CD8-positive, alpha-beta T cell (primary cell): ENCODE measurements at regions of chr5 and their contacts with region 1.

Region 1: DNA sequence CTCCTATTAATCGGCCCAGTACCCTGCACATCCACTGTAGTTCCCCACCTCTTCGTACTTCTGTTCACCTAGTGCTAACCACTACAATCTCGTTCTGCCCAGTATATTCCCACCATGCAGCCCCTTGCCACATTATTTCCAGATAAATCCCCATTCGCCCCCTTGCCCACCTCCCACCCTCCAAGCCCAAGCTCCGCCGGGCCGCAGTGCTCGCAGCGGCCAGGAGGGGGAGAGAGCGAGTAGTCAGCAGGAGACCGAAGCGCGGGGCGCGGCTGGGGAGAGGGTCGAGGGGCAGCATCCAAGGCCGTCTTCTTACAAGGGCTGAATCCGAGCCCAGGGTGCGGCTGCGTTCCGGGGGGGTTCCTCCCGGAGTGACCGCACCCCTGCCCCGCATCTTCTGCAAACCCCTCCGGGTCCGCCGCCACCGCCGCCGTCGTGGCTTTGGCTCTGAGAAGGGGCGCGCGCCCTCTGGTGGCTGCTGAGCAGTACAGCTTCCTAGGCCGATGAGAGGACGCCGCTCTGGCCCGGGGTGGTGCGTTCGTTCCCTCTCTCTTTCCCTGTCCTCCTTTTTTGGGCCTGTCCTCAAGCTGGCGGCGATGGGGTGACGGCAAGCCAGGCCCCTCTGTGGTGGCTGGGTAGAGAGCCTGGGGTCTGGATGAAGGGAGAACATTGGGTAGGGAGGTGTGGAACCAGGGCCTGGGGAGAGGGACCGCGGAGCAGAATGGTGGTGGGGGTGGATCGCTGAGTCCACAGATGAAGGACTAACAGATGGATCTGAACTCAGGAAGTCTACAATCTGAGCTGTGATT is 30.0 kb upstream of the PSD2 start:
- DNase-seq: peak; percentile 74 to 93 (median 83)
- ATAC-seq: peak; percentile 92
- H3K4me3 ChIP-seq: peak overlapping the region; percentile 60 to 67
- H3K4me3 Mint-ChIP-seq: peak overlapping the region; percentile 67
- H3K27ac ChIP-seq: no peak overlapping the region
- H3K27ac Mint-ChIP-seq: no peak overlapping the region
- H3K4me1 ChIP-seq: peaks cover 20% of the 10 kb centered on the region
- H3K4me1 Mint-ChIP-seq: peaks cover 16% of the 10 kb centered on the region
- H3K27me3 ChIP-seq: peaks cover 5 to 9% of the 10 kb centered on the region in 2 experiments
- H3K27me3 Mint-ChIP-seq: peaks cover 24% of the 10 kb centered on the region
- CTCF ChIP-seq: peak; percentile 100

Region 2: GRCh38 chr5:139574641-139575312 is 190.8 kb before region 1 on chr5:
- CTCF ChIA-PET with region 1: interaction called, 4 read pairs
- POLR2A ChIA-PET with region 1: no interaction called
- intact Hi-C with region 1: loop called (anchors 1 kb)
- DNase-seq: peak in 5 of 9 experiments; percentile 16 to 76 (median 45)
- ATAC-seq: peak; percentile 42
- H3K4me3 ChIP-seq: no peak overlapping the region
- H3K4me3 Mint-ChIP-seq: peak overlapping the region; percentile 20
- H3K27ac ChIP-seq: peak overlapping the region in 1 of 2 experiments; percentile 34
- H3K27ac Mint-ChIP-seq: peak overlapping the region; percentile 43
- H3K4me1 ChIP-seq: peaks cover 75% of the 10 kb centered on the region
- H3K4me1 Mint-ChIP-seq: peaks cover 79% of the 10 kb centered on the region
- H3K27me3 ChIP-seq: no peaks in the 10 kb centered on the region
- H3K27me3 Mint-ChIP-seq: no peaks in the 10 kb centered on the region
- CTCF ChIP-seq: peak; percentile 72

Region 3: GRCh38 chr5:139690064-139690802 is 75.4 kb before region 1 on chr5:
- CTCF ChIA-PET with region 1: interaction called, 13 read pairs
- POLR2A ChIA-PET with region 1: no interaction called
- intact Hi-C with region 1: no loop called
- DNase-seq: peak in 4 of 9 experiments; percentile 22 to 64 (median 38)
- ATAC-seq: peak; percentile 77
- H3K4me3 ChIP-seq: no peak overlapping the region
- H3K4me3 Mint-ChIP-seq: no peak overlapping the region
- H3K27ac ChIP-seq: no peak overlapping the region
- H3K27ac Mint-ChIP-seq: no peak overlapping the region
- H3K4me1 ChIP-seq: peaks cover 6% of the 10 kb centered on the region
- H3K4me1 Mint-ChIP-seq: peaks cover 19% of the 10 kb centered on the region
- H3K27me3 ChIP-seq: no peaks in the 10 kb centered on the region
- H3K27me3 Mint-ChIP-seq: no peaks in the 10 kb centered on the region
- CTCF ChIP-seq: peak; percentile 44

Region 4: DNA sequence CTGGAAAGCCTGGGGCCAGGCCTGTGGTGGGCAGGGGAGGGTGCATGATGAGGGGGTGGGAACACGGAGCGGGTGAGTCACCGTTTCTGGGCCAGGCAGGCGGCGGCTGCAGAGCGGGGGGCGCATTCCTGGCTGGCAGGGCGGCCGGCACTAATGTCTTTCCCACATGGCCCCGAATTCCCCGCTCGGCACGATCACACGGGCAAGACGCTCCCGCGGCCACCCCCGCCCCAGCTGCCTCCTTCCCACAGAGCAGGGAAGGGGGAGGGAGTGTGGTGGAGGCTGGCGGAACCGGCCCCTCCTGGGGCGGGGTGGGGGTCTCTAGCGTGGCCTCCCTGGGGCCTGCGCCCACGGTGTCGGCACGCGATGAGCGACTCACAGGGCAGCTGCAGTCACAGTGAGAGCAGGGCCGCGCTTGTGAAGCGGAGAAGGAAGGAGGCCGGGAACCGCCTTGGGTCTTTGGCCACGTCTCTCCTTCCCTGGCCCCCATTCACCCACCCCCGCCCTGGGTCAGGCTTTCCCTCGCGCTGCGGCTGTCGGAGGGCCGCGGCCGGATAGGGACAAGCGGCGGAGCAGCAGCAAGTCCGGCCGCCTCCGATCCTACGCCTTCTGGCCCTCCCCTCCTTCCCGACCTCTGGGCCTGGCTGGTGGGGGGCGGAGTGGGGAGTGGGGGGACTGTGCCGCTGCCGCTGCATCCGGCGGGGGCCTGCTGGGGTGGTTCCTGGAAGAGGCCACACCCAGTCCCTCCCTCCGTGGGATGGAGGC is 68.5 kb before region 1 on chr5:
- CTCF ChIA-PET with region 1: interaction called, 13 read pairs
- POLR2A ChIA-PET with region 1: interaction called, 3 read pairs
- intact Hi-C with region 1: no loop called
- DNase-seq: peak in 5 of 9 experiments; percentile 14 to 47 (median 35)
- ATAC-seq: peak; percentile 50
- H3K4me3 ChIP-seq: peak overlapping the region; percentile 42 to 45
- H3K4me3 Mint-ChIP-seq: peak overlapping the region; percentile 80
- H3K27ac ChIP-seq: no peak overlapping the region
- H3K27ac Mint-ChIP-seq: no peak overlapping the region
- H3K4me1 ChIP-seq: peaks cover 34% of the 10 kb centered on the region
- H3K4me1 Mint-ChIP-seq: peaks cover 35% of the 10 kb centered on the region
- H3K27me3 ChIP-seq: peaks cover 0 to 9% of the 10 kb centered on the region in 2 experiments
- H3K27me3 Mint-ChIP-seq: peaks cover 6% of the 10 kb centered on the region
- CTCF ChIP-seq: no peak

Region 5: DNA sequence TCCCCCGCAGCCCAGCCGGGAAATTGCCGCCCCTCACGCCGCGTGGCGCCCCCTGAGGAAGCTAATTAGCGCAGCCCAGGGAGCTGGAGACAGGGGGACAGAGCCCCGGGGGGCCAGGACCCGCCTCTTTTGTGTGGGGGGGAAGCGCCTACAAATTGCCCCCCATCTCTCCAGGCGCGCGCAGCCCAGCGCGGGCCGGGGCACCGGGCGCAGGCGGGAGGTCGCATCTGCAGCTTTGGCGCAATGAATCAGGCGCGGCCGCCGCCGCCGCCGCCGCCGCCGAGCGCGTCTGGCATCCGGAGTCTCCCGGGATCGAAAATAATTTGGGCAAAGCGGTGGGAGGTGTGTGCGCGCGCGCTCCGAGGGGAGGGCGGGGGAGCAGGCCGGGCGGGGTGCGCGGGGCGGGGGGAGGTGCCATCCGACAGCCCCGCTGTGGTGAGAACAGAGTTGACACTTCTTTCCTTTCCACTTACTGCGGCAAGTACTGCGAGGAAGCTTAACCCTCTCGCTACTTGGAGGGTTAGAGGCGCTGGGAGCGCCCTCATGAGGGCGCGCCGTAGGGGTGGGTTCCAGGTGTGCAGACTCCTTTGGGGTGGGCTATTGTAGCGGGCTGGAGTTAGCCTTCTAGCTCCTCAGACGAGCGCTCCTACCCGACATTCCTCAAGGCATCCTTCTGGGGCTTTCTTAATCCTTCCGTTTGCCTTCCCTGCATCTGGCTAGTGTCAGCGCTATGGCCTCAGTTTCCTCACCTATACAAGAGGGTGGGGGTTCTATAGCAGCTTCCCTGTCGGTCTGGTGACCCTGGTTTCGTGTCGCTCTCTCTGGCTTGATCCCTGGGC is 54.3 kb before region 1 on chr5:
- CTCF ChIA-PET with region 1: interaction called, 12 read pairs
- POLR2A ChIA-PET with region 1: interaction called, 3 read pairs
- intact Hi-C with region 1: loop called (anchors 2 to 5 kb)
- DNase-seq: peak; percentile 32 to 90 (median 71)
- ATAC-seq: peak; percentile 60
- H3K4me3 ChIP-seq: peak overlapping the region; percentile 63 to 64
- H3K4me3 Mint-ChIP-seq: peak overlapping the region; percentile 77
- H3K27ac ChIP-seq: peak overlapping the region; percentile 66 to 84
- H3K27ac Mint-ChIP-seq: no peak overlapping the region
- H3K4me1 ChIP-seq: peaks cover 28% of the 10 kb centered on the region
- H3K4me1 Mint-ChIP-seq: peaks cover 39% of the 10 kb centered on the region
- H3K27me3 ChIP-seq: no peaks in the 10 kb centered on the region
- H3K27me3 Mint-ChIP-seq: no peaks in the 10 kb centered on the region
- CTCF ChIP-seq: no peak

Region 6: DNA sequence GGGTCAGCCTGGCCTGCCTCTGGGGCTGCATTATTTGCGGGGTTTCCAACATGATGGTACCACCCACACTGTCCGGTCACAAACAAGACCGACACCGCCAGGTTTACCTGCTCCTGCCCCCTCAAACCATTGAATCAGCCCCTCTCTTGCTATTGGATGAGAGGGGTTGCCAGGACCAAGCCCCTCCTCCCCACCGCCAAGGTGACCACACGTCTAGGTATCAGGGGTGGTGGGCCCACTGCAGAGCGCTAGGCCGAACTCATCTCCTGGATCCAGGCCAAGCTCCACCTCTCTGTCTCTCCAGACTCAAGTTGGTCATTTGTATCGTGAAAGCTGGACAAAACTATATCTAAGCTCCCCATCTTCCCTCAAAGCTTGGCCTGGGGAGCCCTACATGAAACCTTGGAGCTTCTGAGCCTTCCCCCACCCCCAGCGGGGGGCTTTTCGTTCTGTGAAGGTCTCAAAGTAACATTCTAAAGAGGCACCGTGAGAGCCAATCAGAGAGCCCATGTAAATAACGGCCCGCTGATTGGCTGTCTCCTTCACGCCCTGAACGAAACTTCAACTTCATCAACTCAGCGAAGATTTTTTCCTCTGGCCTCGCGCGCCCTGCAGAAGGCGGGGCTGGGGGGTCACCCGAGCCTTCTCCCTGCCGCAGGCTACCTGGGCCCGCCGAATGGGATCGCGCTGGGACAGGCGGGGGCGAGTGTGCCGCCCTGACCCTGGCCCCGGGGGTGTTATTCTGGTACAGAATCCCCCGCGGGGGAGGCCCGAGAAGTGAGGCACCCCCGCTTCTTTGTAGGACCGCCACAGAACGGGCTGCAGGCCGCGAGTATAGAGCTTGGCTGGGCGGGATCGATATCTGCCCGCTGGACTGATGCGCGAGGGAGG is 19.6 kb before region 1 on chr5:
- CTCF ChIA-PET with region 1: interaction called, 37 read pairs
- POLR2A ChIA-PET with region 1: interaction called, 4 read pairs
- intact Hi-C with region 1: loop called in 1 of 2 experiments (anchors 1 kb)
- DNase-seq: peak in 8 of 9 experiments; percentile 24 to 85 (median 58)
- ATAC-seq: peak; percentile 50
- H3K4me3 ChIP-seq: peak overlapping the region; percentile 61 to 73
- H3K4me3 Mint-ChIP-seq: peak overlapping the region; percentile 95
- H3K27ac ChIP-seq: peak overlapping the region in 1 of 2 experiments; percentile 89
- H3K27ac Mint-ChIP-seq: peak overlapping the region; percentile 64
- H3K4me1 ChIP-seq: peaks cover 20% of the 10 kb centered on the region
- H3K4me1 Mint-ChIP-seq: peaks cover 19% of the 10 kb centered on the region
- H3K27me3 ChIP-seq: no peaks in the 10 kb centered on the region
- H3K27me3 Mint-ChIP-seq: peaks cover 3% of the 10 kb centered on the region
- CTCF ChIP-seq: no peak

Region 7: DNA sequence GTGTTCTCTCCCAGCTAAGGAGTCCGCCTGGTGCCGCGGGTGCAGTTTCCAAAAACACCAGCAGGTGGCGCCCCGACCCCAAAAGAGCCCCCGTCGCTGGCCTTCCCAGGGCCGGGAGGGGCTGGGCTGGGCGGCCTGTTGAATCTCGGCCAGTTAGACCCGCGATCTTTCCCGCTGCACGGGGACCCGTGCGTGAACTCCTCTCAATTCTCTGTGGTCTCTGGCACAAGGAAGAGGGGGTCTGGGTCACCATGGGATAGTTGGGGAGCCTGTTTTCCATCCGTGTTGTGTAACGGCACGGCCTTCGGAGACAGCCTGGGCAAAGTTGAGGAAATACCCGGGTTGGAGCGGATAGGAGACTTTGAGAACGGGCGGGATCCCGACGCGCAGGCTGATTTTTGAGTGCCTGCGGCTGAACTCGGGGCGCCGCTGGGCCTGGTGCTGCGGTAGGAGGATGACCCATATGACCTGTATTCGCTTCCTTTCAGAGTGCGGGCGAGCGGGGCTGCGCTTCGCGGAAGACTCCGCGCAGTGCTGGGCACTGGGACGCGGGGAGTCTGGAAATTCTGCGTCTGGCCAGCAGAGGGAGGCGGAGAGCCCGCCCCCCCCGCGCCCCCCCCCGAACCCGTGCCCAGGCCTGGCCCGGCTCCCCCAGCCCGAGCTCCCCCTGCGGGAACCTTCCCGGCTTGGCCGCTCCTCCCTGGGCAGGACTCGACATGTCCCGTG is 22.1 kb after region 1 on chr5:
- CTCF ChIA-PET with region 1: interaction called, 12 read pairs
- POLR2A ChIA-PET with region 1: no interaction called
- intact Hi-C with region 1: no loop called
- DNase-seq: peak; percentile 69 to 95 (median 84)
- ATAC-seq: peak; percentile 91
- H3K4me3 ChIP-seq: peak overlapping the region; percentile 58 to 63
- H3K4me3 Mint-ChIP-seq: peak overlapping the region; percentile 83
- H3K27ac ChIP-seq: no peak overlapping the region
- H3K27ac Mint-ChIP-seq: no peak overlapping the region
- H3K4me1 ChIP-seq: peaks cover 4% of the 10 kb centered on the region
- H3K4me1 Mint-ChIP-seq: peaks cover 6% of the 10 kb centered on the region
- H3K27me3 ChIP-seq: peaks cover 0 to 9% of the 10 kb centered on the region in 2 experiments
- H3K27me3 Mint-ChIP-seq: peaks cover 26% of the 10 kb centered on the region
- CTCF ChIP-seq: peak; percentile 96

Region 8: GRCh38 chr5:140509898-140510297 is 744.3 kb after region 1 on chr5:
- CTCF ChIA-PET with region 1: no interaction called
- POLR2A ChIA-PET with region 1: no interaction called
- intact Hi-C with region 1: no loop called
- DNase-seq: no peak
- ATAC-seq: no peak
- H3K4me3 ChIP-seq: no peak overlapping the region
- H3K4me3 Mint-ChIP-seq: no peak overlapping the region
- H3K27ac ChIP-seq: no peak overlapping the region
- H3K27ac Mint-ChIP-seq: no peak overlapping the region
- H3K4me1 ChIP-seq: no peaks in the 10 kb centered on the region
- H3K4me1 Mint-ChIP-seq: no peaks in the 10 kb centered on the region
- H3K27me3 ChIP-seq: no peaks in the 10 kb centered on the region
- H3K27me3 Mint-ChIP-seq: no peaks in the 10 kb centered on the region
- CTCF ChIP-seq: no peak